Vagina (tissue), 2 donors: ENCODE measurements at regions of chr1 and their contacts with region 1.

Region 1: GRCh38 chr1:234499119-234499942 is 20.4 kb upstream of the TARBP1 start:
- DNase-seq: peak in 1 of 2 donors; percentile 97
- H3K4me3 ChIP-seq: peak overlapping the region; percentile 22
- H3K27ac ChIP-seq: peak overlapping the region; percentile 90
- H3K4me1 ChIP-seq: peaks cover 25% of the 10 kb centered on the region
- H3K27me3 ChIP-seq: no peaks in the 10 kb centered on the region
- CTCF ChIP-seq: peak; percentile 81 to 95 (median 93)
- POLR2A ChIP-seq: no peak

Region 2: GRCh38 chr1:234533975-234534876 is 34.9 kb after region 1 on chr1:
- intact Hi-C with region 1: loop called (anchors 5 kb)
- DNase-seq: peak in 1 of 2 donors; percentile 98
- H3K4me3 ChIP-seq: no peak overlapping the region
- H3K27ac ChIP-seq: peak overlapping the region; percentile 98
- H3K4me1 ChIP-seq: peaks cover 93% of the 10 kb centered on the region
- H3K27me3 ChIP-seq: no peaks in the 10 kb centered on the region
- CTCF ChIP-seq: no peak
- POLR2A ChIP-seq: no peak

Region 3: GRCh38 chr1:234599617-234600417 is 100.5 kb after region 1 on chr1:
- intact Hi-C with region 1: loop called (anchors 5 kb)
- DNase-seq: peak in 1 of 2 donors; percentile 81
- H3K4me3 ChIP-seq: peak overlapping the region; percentile 44 to 51
- H3K27ac ChIP-seq: peak overlapping the region; percentile 100
- H3K4me1 ChIP-seq: peaks cover 62% of the 10 kb centered on the region
- H3K27me3 ChIP-seq: no peaks in the 10 kb centered on the region
- CTCF ChIP-seq: no peak
- POLR2A ChIP-seq: peak in 1 of 2 donors; percentile 72

Region 4: GRCh38 chr1:234709473-234710228 is 210.3 kb after region 1 on chr1:
- intact Hi-C with region 1: no loop called
- DNase-seq: peak in 1 of 2 donors; percentile 94
- H3K4me3 ChIP-seq: no peak overlapping the region
- H3K27ac ChIP-seq: no peak overlapping the region
- H3K4me1 ChIP-seq: no peaks in the 10 kb centered on the region
- H3K27me3 ChIP-seq: no peaks in the 10 kb centered on the region
- CTCF ChIP-seq: no peak
- POLR2A ChIP-seq: no peak

Region 5: GRCh38 chr1:235077571-235078479 is 578.5 kb after region 1 on chr1:
- intact Hi-C with region 1: loop called (anchors 5 kb)
- DNase-seq: no peak
- H3K4me3 ChIP-seq: no peak overlapping the region
- H3K27ac ChIP-seq: peak overlapping the region; percentile 55
- H3K4me1 ChIP-seq: peaks cover 91% of the 10 kb centered on the region
- H3K27me3 ChIP-seq: no peaks in the 10 kb centered on the region
- CTCF ChIP-seq: no peak
- POLR2A ChIP-seq: no peak